ENCODE measurements at regions of chr16 and their contacts with region 1.

Region 1: GRCh38 chr16:31713071-31713944 is 160.3 kb upstream of the ZNF267 start:
- DNase-seq: peak; percentile 96
- H3K4me3 ChIP-seq: peak overlapping the region; percentile 98
- H3K27ac ChIP-seq: peak overlapping the region; percentile 92
- H3K4me1 ChIP-seq: peaks cover 15% of the 10 kb centered on the region
- H3K27me3 ChIP-seq: no peaks in the 10 kb centered on the region

Region 2: DNA sequence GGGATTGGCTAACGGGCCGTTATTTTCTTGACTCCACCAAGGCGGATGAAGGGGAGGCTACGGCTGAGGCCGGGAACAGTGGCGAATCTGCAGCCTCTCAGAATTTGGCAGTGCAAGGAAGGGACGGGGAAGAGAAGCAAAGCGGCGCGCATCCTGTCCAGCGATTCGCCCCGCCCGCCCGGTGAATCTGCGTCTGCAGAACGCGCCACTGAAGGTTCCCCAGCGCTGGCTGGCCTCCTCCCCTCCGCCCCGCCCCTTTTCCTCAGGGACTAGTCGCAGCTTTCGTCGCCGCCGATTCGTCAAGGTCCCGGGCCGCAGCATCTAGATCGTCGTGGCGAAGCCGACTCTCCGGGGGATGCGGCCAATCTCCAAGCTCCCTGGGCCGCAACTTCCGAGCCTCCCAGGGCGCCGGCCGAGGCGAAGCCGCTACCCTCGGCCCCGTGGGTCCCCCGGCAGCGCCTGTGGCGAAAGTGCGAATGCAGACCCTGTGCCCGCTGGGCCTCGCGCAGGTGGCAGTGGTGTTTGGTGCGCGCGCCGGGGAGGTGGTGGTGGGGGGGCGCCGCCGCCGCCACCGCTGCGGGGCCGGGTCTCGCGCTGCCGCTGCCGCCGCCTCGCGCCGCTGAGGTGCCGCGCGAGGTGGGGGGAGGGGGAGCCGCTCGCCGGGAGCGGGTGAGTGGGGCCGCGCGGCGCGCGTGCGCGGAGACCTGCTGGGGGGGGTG is 755.7 kb before region 1 on chr16 and contains the start of gene SETD1A:
- in situ Hi-C with region 1: loop called (anchors 25 kb)
- DNase-seq: peak; percentile 99
- H3K4me3 ChIP-seq: peak within 1 kb of the TSS; percentile 98
- H3K27ac ChIP-seq: peak within 1 kb of the TSS; percentile 100
- H3K4me1 ChIP-seq: peaks cover 7% of the 10 kb centered on the region
- H3K27me3 ChIP-seq: no peaks in the 10 kb centered on the region
- total RNA-seq, gene SETD1A: 2.0 and 2.3 TPM in 2 replicates

Region 3: GRCh38 chr16:31202414-31203375 is 510.6 kb before region 1 on chr16 and contains the start of gene PYCARD:
- in situ Hi-C with region 1: loop called (anchors 25 kb)
- DNase-seq: peak; percentile 76
- H3K4me3 ChIP-seq: peak within 1 kb of the TSS; percentile 82
- H3K27ac ChIP-seq: no peak within 1 kb of the TSS
- H3K4me1 ChIP-seq: peaks cover 9% of the 10 kb centered on the region; the same call in 1 of the 2 replicates
- H3K27me3 ChIP-seq: no peaks in the 10 kb centered on the region
- total RNA-seq, gene PYCARD: 20.1 and 28.1 TPM in 2 replicates

Measured in GM23248 (cell line).